H1 (cell line): ENCODE measurements at regions of chr14 and their contacts with region 1.

Region 1: GRCh38 chr14:54722781-54723432 is 156.0 kb downstream of the SAMD4A start:
- DNase-seq: no peak
- H3K4me3 ChIP-seq: no peak overlapping the region
- H3K27ac ChIP-seq: no peak overlapping the region
- H3K4me1 ChIP-seq: peaks cover 0 to 5% (median 3%) of the 10 kb centered on the region in 4 experiments; a peak in 2 of 7 replicates
- H3K27me3 ChIP-seq: peaks cover 0 to 1% (median 0%) of the 10 kb centered on the region in 4 experiments; a peak in 1 of 7 replicates
- CTCF ChIP-seq: peak in 2 of 3 experiments; percentile 49 to 50; a peak in 3 of 4 replicates
- EP300 ChIP-seq: no peak
- POLR2A ChIP-seq: no peak
- RAD21 ChIP-seq: peak; percentile 62 to 65

Region 2: GRCh38 chr14:54606178-54606577 is 116.7 kb before region 1 on chr14:
- CTCF ChIA-PET with region 1: no interaction called
- POLR2A ChIA-PET with region 1: no interaction called
- DNase-seq: no peak
- H3K4me3 ChIP-seq: no peak overlapping the region
- H3K27ac ChIP-seq: no peak overlapping the region
- H3K4me1 ChIP-seq: peaks cover 0 to 7% (median 3%) of the 10 kb centered on the region in 4 experiments; a peak in 6 of 7 replicates
- H3K27me3 ChIP-seq: no peaks in the 10 kb centered on the region
- CTCF ChIP-seq: no peak
- EP300 ChIP-seq: no peak
- POLR2A ChIP-seq: no peak
- RAD21 ChIP-seq: no peak

Region 3: GRCh38 chr14:54698966-54699530 is 23.9 kb before region 1 on chr14:
- CTCF ChIA-PET with region 1: interaction called, 26 read pairs
- POLR2A ChIA-PET with region 1: no interaction called
- DNase-seq: no peak
- H3K4me3 ChIP-seq: no peak overlapping the region
- H3K27ac ChIP-seq: no peak overlapping the region; the same call in 1 of the 2 replicates
- H3K4me1 ChIP-seq: peaks cover 0 to 2% (median 0%) of the 10 kb centered on the region in 4 experiments; a peak in 1 of 7 replicates
- H3K27me3 ChIP-seq: no peaks in the 10 kb centered on the region
- CTCF ChIP-seq: no peak
- EP300 ChIP-seq: no peak
- POLR2A ChIP-seq: no peak
- RAD21 ChIP-seq: no peak

Region 4: DNA sequence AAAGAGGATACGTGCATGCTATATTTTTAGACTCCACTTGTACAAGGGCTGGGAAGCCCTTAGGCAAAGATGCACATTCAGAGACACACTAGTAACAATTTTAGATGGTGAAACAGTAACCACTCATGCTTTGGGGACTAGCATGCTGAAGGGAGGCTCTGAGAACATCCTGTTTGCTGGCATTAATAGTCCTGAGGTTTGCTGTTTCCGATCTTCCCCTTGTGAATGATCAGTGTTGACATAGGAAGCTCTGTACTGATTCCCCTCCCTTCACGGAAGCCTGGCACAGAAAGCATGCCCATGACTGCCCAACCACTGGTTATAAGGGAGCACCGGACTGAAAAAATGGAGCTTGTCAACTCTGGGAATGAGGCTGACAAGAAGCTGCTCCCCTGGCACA is 15.1 kb after region 1 on chr14:
- CTCF ChIA-PET with region 1: interaction called, 15 read pairs
- POLR2A ChIA-PET with region 1: interaction called, 4 read pairs
- DNase-seq: no peak
- H3K4me3 ChIP-seq: no peak overlapping the region
- H3K27ac ChIP-seq: no peak overlapping the region
- H3K4me1 ChIP-seq: no peaks in the 10 kb centered on the region
- H3K27me3 ChIP-seq: no peaks in the 10 kb centered on the region
- CTCF ChIP-seq: no peak
- EP300 ChIP-seq: no peak
- POLR2A ChIP-seq: no peak
- RAD21 ChIP-seq: no peak